HCT116 (cell line): ENCODE measurements at regions of chr13 and their contacts with region 1.

Region 1: GRCh38 chr13:100392709-100393641 is 195.6 kb downstream of the GGACT start:
- DNase-seq: peak; percentile 98
- ATAC-seq: peak; percentile 79
- H3K4me3 ChIP-seq: peak overlapping the region in 1 of 2 experiments; percentile 46; a peak in 2 of 4 replicates
- H3K27ac ChIP-seq: peak overlapping the region; percentile 98
- H3K4me1 ChIP-seq: peaks cover 83 to 87% of the 10 kb centered on the region in 2 experiments
- H3K27me3 ChIP-seq: no peaks in the 10 kb centered on the region
- CTCF ChIP-seq: no peak
- POLR2A ChIP-seq: no peak
- RAD21 ChIP-seq: peak; percentile 49; the same call in 1 of the 2 replicates

Region 2: DNA sequence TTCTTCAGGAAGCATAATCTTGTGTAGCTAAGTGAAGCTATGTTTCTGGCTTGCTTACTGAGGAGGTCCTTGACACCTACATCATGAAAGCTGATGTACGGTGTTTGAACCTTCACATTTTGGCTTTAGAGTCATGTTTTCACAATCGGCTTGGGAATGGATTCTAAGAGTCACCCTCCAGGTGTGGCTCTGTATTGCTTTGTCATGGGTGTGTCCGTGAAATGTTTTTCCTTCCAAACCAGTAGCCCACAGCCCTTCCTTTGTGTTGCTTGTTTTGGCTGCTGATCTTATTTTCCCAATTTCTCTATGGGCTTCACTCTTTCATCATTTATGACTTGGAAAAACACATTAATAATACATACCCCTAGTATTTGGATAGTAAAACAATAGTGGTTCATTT is 45.0 kb before region 1 on chr13:
- CTCF ChIA-PET with region 1: no interaction called
- POLR2A ChIA-PET with region 1: no interaction called
- RAD21 ChIA-PET with region 1: no interaction called
- intact Hi-C with region 1: loop called (anchors 1 kb)
- DNase-seq: peak; percentile 67
- ATAC-seq: peak; percentile 91
- H3K4me3 ChIP-seq: no peak overlapping the region
- H3K27ac ChIP-seq: peak overlapping the region; percentile 44; the same call in 1 of the 2 replicates
- H3K4me1 ChIP-seq: peaks cover 15 to 30% of the 10 kb centered on the region in 2 experiments
- H3K27me3 ChIP-seq: no peaks in the 10 kb centered on the region
- CTCF ChIP-seq: no peak
- POLR2A ChIP-seq: no peak
- RAD21 ChIP-seq: no peak

Region 3: DNA sequence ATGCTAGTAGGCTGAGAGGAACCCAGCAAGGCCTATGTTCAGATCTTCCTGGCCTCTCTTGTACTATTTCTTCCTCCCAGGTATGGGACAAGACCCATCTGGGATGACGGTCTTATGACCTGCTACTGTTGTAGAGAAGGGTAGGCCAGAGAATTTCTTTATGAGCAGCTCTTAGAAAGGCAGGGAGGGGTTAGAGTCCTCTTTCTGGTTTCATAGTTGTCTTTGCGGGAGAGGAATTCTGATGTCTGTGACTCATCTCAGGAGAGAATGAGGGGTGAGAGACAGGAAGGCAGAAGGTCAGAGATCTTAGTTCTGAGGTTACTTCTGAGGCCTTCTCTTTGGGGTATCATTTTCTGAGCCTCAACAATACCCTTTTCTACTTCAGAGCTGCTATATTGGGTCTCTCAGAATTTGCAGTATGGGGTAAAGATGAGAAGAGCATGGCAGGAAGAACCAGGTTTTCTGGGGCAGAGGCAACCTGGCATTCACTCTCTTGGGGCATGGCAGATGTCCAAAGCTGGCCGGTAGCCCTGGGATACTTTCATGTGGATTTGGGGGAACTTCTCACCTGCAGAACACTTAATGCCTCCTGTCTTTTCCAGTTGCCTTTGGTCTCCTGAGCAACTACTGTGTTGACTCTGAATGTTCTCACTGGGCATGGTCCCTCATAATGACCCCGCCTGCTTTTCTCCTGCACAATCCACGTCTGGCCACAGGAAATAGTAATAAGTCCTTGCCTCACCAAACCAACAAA is 41.2 kb after region 1 on chr13:
- CTCF ChIA-PET with region 1: no interaction called
- POLR2A ChIA-PET with region 1: no interaction called
- RAD21 ChIA-PET with region 1: no interaction called
- intact Hi-C with region 1: loop called (anchors 1 kb)
- DNase-seq: peak; percentile 78
- ATAC-seq: peak; percentile 90
- H3K4me3 ChIP-seq: peak overlapping the region in 1 of 2 experiments; percentile 34; a peak in 2 of 4 replicates
- H3K27ac ChIP-seq: peak overlapping the region; percentile 78
- H3K4me1 ChIP-seq: peaks cover 35% of the 10 kb centered on the region in 2 experiments
- H3K27me3 ChIP-seq: no peaks in the 10 kb centered on the region
- CTCF ChIP-seq: no peak
- POLR2A ChIP-seq: no peak
- RAD21 ChIP-seq: peak; percentile 33